Naive thymus-derived CD4-positive, alpha-beta T cell (primary cell): ENCODE measurements at regions of chr1 and their contacts with region 1.

Region 1: DNA sequence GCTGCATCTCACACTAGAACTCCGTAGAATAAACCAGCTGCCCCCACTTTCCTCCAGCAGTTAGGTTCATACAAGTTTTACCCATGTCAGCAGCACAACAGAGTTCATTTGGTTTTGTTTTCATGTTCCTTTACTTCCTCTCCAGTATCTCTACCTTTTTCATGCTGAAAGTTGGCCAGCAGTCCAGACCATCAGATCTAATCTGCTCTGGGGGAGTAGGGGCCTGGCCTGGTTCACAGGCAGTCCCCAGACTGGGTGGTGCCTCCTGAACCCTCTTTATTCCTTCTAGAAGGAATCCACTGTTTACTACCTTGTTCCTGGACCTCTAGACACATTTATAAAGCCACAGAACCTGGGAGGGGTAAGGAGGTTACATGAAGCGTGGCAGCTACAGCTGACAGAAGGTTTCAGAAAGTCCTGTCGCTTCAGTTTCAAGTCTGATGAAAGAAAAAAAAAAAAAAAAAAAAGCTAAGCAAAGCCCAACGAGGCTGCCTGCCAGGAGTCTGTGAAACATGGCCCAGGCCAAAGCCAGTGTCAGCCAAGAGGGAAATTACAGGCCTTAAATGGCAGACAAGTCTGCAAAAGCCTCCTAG is 184.6 kb upstream of the JUN start:
- DNase-seq: peak in 6 of 9 donors; percentile 34 to 66 (median 56)
- ATAC-seq: peak; percentile 66
- H3K4me3 ChIP-seq: no peak overlapping the region
- H3K4me3 Mint-ChIP-seq: peak overlapping the region; percentile 55 to 84 (median 70)
- H3K27ac ChIP-seq: peak overlapping the region; percentile 72
- H3K27ac Mint-ChIP-seq: peak overlapping the region; percentile 91 to 100 (median 96)
- H3K4me1 ChIP-seq: peaks cover 16 to 28% of the 10 kb centered on the region in 2 donors
- H3K4me1 Mint-ChIP-seq: peaks cover 13 to 73% (median 41%) of the 10 kb centered on the region in 7 donors
- H3K27me3 ChIP-seq: no peaks in the 10 kb centered on the region
- H3K27me3 Mint-ChIP-seq: no peaks in the 10 kb centered on the region

Region 2: GRCh38 chr1:58546520-58547308 is 421.7 kb before region 1 on chr1 and contains the start of gene OMA1:
- CTCF ChIA-PET with region 1: no interaction called
- POLR2A ChIA-PET with region 1: no interaction called
- intact Hi-C with region 1: no loop called
- DNase-seq: peak; percentile 96 to 98 (median 98)
- ATAC-seq: peak; percentile 97
- H3K4me3 ChIP-seq: peak within 1 kb of the TSS; percentile 65
- H3K4me3 Mint-ChIP-seq: peak within 1 kb of the TSS; percentile 92 to 98 (median 96)
- H3K27ac ChIP-seq: peak within 1 kb of the TSS; percentile 95
- H3K27ac Mint-ChIP-seq: peak within 1 kb of the TSS; percentile 95 to 99 (median 99)
- H3K4me1 ChIP-seq: peaks cover 7% of the 10 kb centered on the region in 2 donors
- H3K4me1 Mint-ChIP-seq: peaks cover 11 to 44% (median 33%) of the 10 kb centered on the region in 7 donors
- H3K27me3 ChIP-seq: no peaks in the 10 kb centered on the region
- H3K27me3 Mint-ChIP-seq: peaks cover 0 to 28% (median 0%) of the 10 kb centered on the region in 5 donors
- total RNA-seq, gene OMA1: 22.7 to 72.5 (median 46.5) TPM

Region 3: GRCh38 chr1:58848818-58849411 is 119.5 kb before region 1 on chr1:
- CTCF ChIA-PET with region 1: no interaction called
- POLR2A ChIA-PET with region 1: no interaction called
- intact Hi-C with region 1: no loop called
- DNase-seq: no peak
- ATAC-seq: no peak
- H3K4me3 ChIP-seq: no peak overlapping the region
- H3K4me3 Mint-ChIP-seq: no peak overlapping the region
- H3K27ac ChIP-seq: no peak overlapping the region
- H3K27ac Mint-ChIP-seq: no peak overlapping the region
- H3K4me1 ChIP-seq: no peaks in the 10 kb centered on the region
- H3K4me1 Mint-ChIP-seq: peaks cover 0 to 13% (median 0%) of the 10 kb centered on the region in 7 donors
- H3K27me3 ChIP-seq: no peaks in the 10 kb centered on the region
- H3K27me3 Mint-ChIP-seq: no peaks in the 10 kb centered on the region

Region 4: GRCh38 chr1:58932859-58933598 is 35.4 kb before region 1 on chr1:
- CTCF ChIA-PET with region 1: no interaction called
- POLR2A ChIA-PET with region 1: no interaction called
- intact Hi-C with region 1: loop called in 1 of 2 experiments (anchors 5 kb)
- DNase-seq: no peak
- ATAC-seq: peak; percentile 69
- H3K4me3 ChIP-seq: no peak overlapping the region
- H3K4me3 Mint-ChIP-seq: peak overlapping the region in 1 of 10 donors; percentile 21
- H3K27ac ChIP-seq: no peak overlapping the region
- H3K27ac Mint-ChIP-seq: peak overlapping the region in 3 of 9 donors; percentile 4 to 45 (median 25)
- H3K4me1 ChIP-seq: peaks cover 0 to 9% of the 10 kb centered on the region in 2 donors
- H3K4me1 Mint-ChIP-seq: peaks cover 8 to 64% (median 39%) of the 10 kb centered on the region in 7 donors
- H3K27me3 ChIP-seq: no peaks in the 10 kb centered on the region
- H3K27me3 Mint-ChIP-seq: peaks cover 0 to 6% (median 0%) of the 10 kb centered on the region in 5 donors

Region 5: GRCh38 chr1:58986996-58987767 is 18.7 kb after region 1 on chr1:
- CTCF ChIA-PET with region 1: no interaction called
- POLR2A ChIA-PET with region 1: no interaction called
- intact Hi-C with region 1: loop called in 1 of 2 experiments (anchors 2 kb)
- DNase-seq: peak in 6 of 9 donors; percentile 2 to 29 (median 14)
- ATAC-seq: peak; percentile 61
- H3K4me3 ChIP-seq: no peak overlapping the region
- H3K4me3 Mint-ChIP-seq: peak overlapping the region in 2 of 10 donors; percentile 12 to 64
- H3K27ac ChIP-seq: no peak overlapping the region
- H3K27ac Mint-ChIP-seq: peak overlapping the region in 5 of 9 donors; percentile 2 to 42 (median 13)
- H3K4me1 ChIP-seq: no peaks in the 10 kb centered on the region
- H3K4me1 Mint-ChIP-seq: peaks cover 7 to 41% (median 18%) of the 10 kb centered on the region in 7 donors
- H3K27me3 ChIP-seq: no peaks in the 10 kb centered on the region
- H3K27me3 Mint-ChIP-seq: no peaks in the 10 kb centered on the region

Region 6: GRCh38 chr1:58996341-58997059 is 28.0 kb after region 1 on chr1:
- CTCF ChIA-PET with region 1: no interaction called
- POLR2A ChIA-PET with region 1: no interaction called
- intact Hi-C with region 1: loop called in 1 of 2 experiments (anchors 2 kb)
- DNase-seq: no peak
- ATAC-seq: no peak
- H3K4me3 ChIP-seq: no peak overlapping the region
- H3K4me3 Mint-ChIP-seq: peak overlapping the region in 1 of 10 donors; percentile 28
- H3K27ac ChIP-seq: no peak overlapping the region
- H3K27ac Mint-ChIP-seq: peak overlapping the region in 1 of 9 donors; percentile 83
- H3K4me1 ChIP-seq: no peaks in the 10 kb centered on the region
- H3K4me1 Mint-ChIP-seq: peaks cover 0 to 33% (median 0%) of the 10 kb centered on the region in 7 donors
- H3K27me3 ChIP-seq: no peaks in the 10 kb centered on the region
- H3K27me3 Mint-ChIP-seq: no peaks in the 10 kb centered on the region